ENCODE measurements at regions of chr6 and their contacts with region 1.

Region 1: DNA sequence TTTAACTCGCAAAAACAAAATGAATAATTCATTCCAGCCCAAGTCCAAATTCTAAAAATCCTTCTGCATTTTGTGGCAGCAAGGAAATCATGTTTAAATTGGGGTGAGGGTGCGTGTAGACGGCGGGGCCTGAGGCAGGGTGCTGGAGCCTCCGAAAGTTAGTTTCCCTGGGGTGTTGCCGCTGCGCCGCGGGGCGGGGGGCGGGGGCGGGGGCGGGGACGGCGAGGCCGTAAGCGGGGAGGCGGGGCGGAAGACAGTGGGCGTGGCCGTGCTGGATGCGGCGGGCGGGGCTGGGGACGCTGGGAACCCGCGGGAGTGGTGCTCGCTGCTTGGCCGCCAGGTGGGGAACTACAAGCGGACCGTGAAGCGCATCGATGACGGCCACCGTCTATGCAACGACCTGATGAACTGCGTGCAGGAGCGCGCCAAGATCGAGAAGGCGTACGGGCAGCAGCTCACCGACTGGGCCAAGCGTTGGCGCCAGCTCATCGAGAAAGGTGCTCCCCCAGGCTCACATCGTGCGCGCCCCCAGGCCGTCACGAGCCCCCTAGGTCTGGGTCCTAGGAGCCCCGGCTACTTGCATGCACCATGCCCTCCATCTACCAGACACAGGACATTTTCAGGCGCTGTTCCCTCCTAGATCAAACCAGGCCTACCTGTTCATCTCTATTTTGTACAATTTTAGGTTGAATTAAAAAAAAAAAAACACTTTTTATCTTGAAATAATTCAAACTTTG is 29.0 kb downstream of the SPDEF start:
- DNase-seq: peak; percentile 89
- H3K4me3 ChIP-seq: peak overlapping the region in 2 of 3 experiments; percentile 4 to 42
- H3K27ac ChIP-seq: no peak overlapping the region
- H3K4me1 ChIP-seq: peaks cover 2% of the 10 kb centered on the region
- H3K27me3 ChIP-seq: no peaks in the 10 kb centered on the region
- CTCF ChIP-seq: peak; percentile 56 to 86
- POLR2A ChIP-seq: peak; percentile 42

Region 2: DNA sequence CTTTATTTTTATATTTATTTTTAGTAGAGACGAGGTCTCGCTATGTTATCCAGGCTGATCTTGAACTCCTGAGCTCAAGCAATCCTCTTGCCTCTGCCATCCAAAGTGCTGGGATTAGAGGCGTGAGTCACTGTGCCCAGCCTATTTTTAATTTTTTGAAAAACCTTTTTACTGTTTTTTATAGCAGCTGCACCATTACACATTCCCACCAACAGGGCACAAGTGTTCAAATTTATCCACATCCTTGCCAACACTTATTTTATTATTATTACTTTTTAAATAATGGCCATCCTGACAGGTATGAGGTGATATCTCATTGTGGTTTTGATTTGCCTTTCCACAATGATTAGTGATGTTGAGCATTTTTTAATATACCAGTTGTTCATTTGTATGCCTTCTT is 18.7 kb before region 1 on chr6:
- CTCF ChIA-PET with region 1: no interaction called
- POLR2A ChIA-PET with region 1: no interaction called
- dilution Hi-C with region 1: no loop called
- intact Hi-C with region 1: no loop called
- DNase-seq: no peak
- H3K4me3 ChIP-seq: no peak overlapping the region
- H3K27ac ChIP-seq: no peak overlapping the region
- H3K4me1 ChIP-seq: no peaks in the 10 kb centered on the region
- H3K27me3 ChIP-seq: peaks cover 5 to 10% of the 10 kb centered on the region in 2 experiments
- CTCF ChIP-seq: no peak
- POLR2A ChIP-seq: no peak

Region 3: GRCh38 chr6:34560366-34561226 is 33.4 kb after region 1 on chr6:
- CTCF ChIA-PET with region 1: no interaction called
- POLR2A ChIA-PET with region 1: no interaction called
- dilution Hi-C with region 1: no loop called
- intact Hi-C with region 1: loop called (anchors 5 kb)
- DNase-seq: peak; percentile 13
- H3K4me3 ChIP-seq: no peak overlapping the region
- H3K27ac ChIP-seq: no peak overlapping the region
- H3K4me1 ChIP-seq: peaks cover 5% of the 10 kb centered on the region
- H3K27me3 ChIP-seq: no peaks in the 10 kb centered on the region
- CTCF ChIP-seq: peak in 1 of 2 donors; percentile 5
- POLR2A ChIP-seq: no peak